ENCODE measurements at regions of chr15 and their contacts with region 1.

Region 1: DNA sequence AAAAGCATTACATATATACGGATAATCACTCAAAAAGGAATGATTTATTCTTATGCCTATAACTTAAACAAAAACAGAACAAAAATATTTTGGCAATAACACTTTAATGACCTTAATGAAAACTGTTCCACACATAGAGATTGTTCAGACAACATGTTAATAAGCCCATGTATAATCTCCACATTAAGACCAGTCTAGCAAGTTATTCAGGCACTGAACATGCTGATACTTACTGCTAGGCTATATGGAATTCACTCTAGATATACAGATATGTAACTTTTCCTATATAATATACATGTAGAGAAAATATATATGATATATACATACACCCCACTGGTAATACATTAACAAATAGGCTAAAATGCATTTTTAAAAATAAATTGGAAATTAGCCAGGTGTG is 43.8 kb upstream of the USP50 start:
- DNase-seq: no peak
- ATAC-seq: no peak
- H3K4me3 ChIP-seq: no peak overlapping the region
- H3K27ac ChIP-seq: no peak overlapping the region
- H3K4me1 ChIP-seq: no peaks in the 10 kb centered on the region
- H3K27me3 ChIP-seq: no peaks in the 10 kb centered on the region
- CTCF ChIP-seq: no peak

Region 2: GRCh38 chr15:50576166-50576565 is 14.1 kb before region 1 on chr15:
- CTCF ChIA-PET with region 1: no interaction called
- POLR2A ChIA-PET with region 1: interaction called, 15 read pairs
- intact Hi-C with region 1: no loop called
- DNase-seq: no peak
- ATAC-seq: no peak
- H3K4me3 ChIP-seq: no peak overlapping the region
- H3K27ac ChIP-seq: no peak overlapping the region
- H3K4me1 ChIP-seq: no peaks in the 10 kb centered on the region
- H3K27me3 ChIP-seq: no peaks in the 10 kb centered on the region
- CTCF ChIP-seq: no peak